Naive thymus-derived CD4-positive, alpha-beta T cell (primary cell): ENCODE measurements at regions of chr12 and their contacts with region 1.

Region 1: DNA sequence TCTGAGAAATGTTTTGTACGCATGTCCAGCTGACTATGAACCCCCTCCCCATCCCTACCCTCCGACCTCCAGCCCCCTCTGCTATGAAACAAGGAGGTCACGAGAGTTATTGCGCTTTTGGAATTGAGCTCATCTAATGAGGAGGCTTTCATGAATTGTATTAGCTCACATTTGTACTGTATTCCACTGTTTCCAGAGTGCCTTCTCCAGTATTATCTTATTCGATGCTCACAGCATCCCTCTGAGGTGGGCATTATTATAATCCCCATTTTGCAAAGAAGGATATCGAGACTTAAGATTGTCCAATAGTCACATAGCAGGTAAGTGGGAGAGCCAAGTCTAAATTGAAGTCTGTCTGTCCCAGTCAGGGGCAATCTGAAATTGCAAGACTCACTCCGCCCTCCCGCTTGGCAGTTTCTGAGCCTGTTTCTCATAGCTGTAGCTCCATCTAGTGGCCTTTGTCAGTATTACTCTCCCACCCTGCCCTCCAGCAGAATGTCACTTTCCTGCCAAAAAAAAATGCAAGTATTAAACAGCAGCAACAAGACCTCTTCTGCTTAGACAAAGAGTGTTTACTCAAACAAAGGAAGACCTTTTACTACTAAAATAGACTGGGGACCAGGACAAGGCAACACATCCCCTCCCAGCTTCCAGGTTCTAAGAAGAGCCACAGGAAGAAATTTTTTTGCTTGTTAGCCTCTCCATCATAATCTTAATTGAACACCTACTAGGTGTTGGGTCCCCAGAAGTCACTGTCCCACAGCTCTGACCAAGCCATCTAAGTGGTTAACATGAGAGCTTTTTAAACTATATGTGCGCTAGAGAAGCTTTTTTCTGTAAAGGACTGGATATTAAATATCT is 48.6 kb upstream of the TMEM233 start:
- DNase-seq: peak; percentile 5 to 58 (median 39)
- ATAC-seq: peak; percentile 70
- H3K4me3 ChIP-seq: no peak overlapping the region
- H3K4me3 Mint-ChIP-seq: no peak overlapping the region
- H3K27ac ChIP-seq: no peak overlapping the region
- H3K27ac Mint-ChIP-seq: no peak overlapping the region
- H3K4me1 ChIP-seq: no peaks in the 10 kb centered on the region
- H3K4me1 Mint-ChIP-seq: no peaks in the 10 kb centered on the region
- H3K27me3 ChIP-seq: no peaks in the 10 kb centered on the region
- H3K27me3 Mint-ChIP-seq: peaks cover 0 to 61% (median 50%) of the 10 kb centered on the region in 5 donors

Region 2: GRCh38 chr12:118189741-118190191 is 1355.2 kb before region 1 on chr12:
- CTCF ChIA-PET with region 1: no interaction called
- POLR2A ChIA-PET with region 1: no interaction called
- intact Hi-C with region 1: loop called in 1 of 2 experiments (anchors 10 kb)
- DNase-seq: no peak
- ATAC-seq: no peak
- H3K4me3 ChIP-seq: no peak overlapping the region
- H3K4me3 Mint-ChIP-seq: no peak overlapping the region
- H3K27ac ChIP-seq: no peak overlapping the region
- H3K27ac Mint-ChIP-seq: no peak overlapping the region
- H3K4me1 ChIP-seq: no peaks in the 10 kb centered on the region
- H3K4me1 Mint-ChIP-seq: peaks cover 0 to 16% (median 5%) of the 10 kb centered on the region in 7 donors
- H3K27me3 ChIP-seq: no peaks in the 10 kb centered on the region
- H3K27me3 Mint-ChIP-seq: no peaks in the 10 kb centered on the region

Region 3: GRCh38 chr12:118404876-118405521 is 1140.0 kb before region 1 on chr12:
- CTCF ChIA-PET with region 1: interaction called, 6 read pairs
- POLR2A ChIA-PET with region 1: no interaction called
- intact Hi-C with region 1: loop called in 1 of 2 experiments (anchors 10 kb)
- DNase-seq: peak in 7 of 9 donors; percentile 18 to 42 (median 33)
- ATAC-seq: peak; percentile 72
- H3K4me3 ChIP-seq: no peak overlapping the region
- H3K4me3 Mint-ChIP-seq: no peak overlapping the region
- H3K27ac ChIP-seq: no peak overlapping the region
- H3K27ac Mint-ChIP-seq: no peak overlapping the region
- H3K4me1 ChIP-seq: no peaks in the 10 kb centered on the region
- H3K4me1 Mint-ChIP-seq: peaks cover 0 to 3% (median 0%) of the 10 kb centered on the region in 7 donors
- H3K27me3 ChIP-seq: no peaks in the 10 kb centered on the region
- H3K27me3 Mint-ChIP-seq: no peaks in the 10 kb centered on the region

Region 4: GRCh38 chr12:119115296-119115905 is 429.6 kb before region 1 on chr12:
- CTCF ChIA-PET with region 1: interaction called, 3 read pairs
- POLR2A ChIA-PET with region 1: no interaction called
- intact Hi-C with region 1: loop called in 1 of 2 experiments (anchors 5 kb)
- DNase-seq: peak in 3 of 9 donors; percentile 8 to 20 (median 11)
- ATAC-seq: no peak
- H3K4me3 ChIP-seq: no peak overlapping the region
- H3K4me3 Mint-ChIP-seq: no peak overlapping the region
- H3K27ac ChIP-seq: no peak overlapping the region
- H3K27ac Mint-ChIP-seq: no peak overlapping the region
- H3K4me1 ChIP-seq: no peaks in the 10 kb centered on the region
- H3K4me1 Mint-ChIP-seq: no peaks in the 10 kb centered on the region
- H3K27me3 ChIP-seq: no peaks in the 10 kb centered on the region
- H3K27me3 Mint-ChIP-seq: peaks cover 0 to 24% (median 5%) of the 10 kb centered on the region in 5 donors

Region 5: DNA sequence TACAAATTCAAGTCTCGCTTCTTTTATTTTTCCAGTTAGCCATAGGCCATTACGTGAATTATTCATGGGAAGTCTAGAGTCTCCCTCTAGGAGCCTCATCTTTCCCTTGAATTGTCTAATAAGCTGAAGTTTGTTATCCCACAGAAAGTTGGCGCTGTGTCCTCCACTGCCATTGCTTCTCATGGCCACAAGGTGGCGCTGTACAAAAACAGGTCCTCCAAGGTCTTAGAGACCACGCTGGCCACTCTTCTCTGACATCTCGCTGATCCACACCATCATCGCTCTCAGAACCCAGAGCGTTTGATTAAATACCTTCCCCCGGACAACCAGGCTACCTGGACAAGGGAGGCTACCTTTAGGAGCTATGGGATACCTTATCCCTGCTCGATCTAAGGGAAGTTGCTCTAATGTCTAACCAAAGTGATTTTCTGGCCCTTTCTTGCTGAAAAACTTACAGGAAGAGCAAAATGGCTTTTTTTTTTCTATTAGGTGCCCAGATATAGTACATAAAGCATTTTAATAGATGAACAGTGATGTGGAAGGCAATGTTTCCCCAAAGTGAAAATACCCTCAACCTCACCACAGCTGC is 100.4 kb before region 1 on chr12:
- CTCF ChIA-PET with region 1: no interaction called
- POLR2A ChIA-PET with region 1: no interaction called
- intact Hi-C with region 1: loop called in 1 of 2 experiments (anchors 1 kb)
- DNase-seq: peak in 5 of 9 donors; percentile 2 to 38 (median 8)
- ATAC-seq: peak; percentile 60
- H3K4me3 ChIP-seq: no peak overlapping the region
- H3K4me3 Mint-ChIP-seq: no peak overlapping the region
- H3K27ac ChIP-seq: no peak overlapping the region
- H3K27ac Mint-ChIP-seq: no peak overlapping the region
- H3K4me1 ChIP-seq: no peaks in the 10 kb centered on the region
- H3K4me1 Mint-ChIP-seq: peaks cover 0 to 3% (median 0%) of the 10 kb centered on the region in 7 donors
- H3K27me3 ChIP-seq: peaks cover 0 to 4% of the 10 kb centered on the region in 2 donors
- H3K27me3 Mint-ChIP-seq: peaks cover 0 to 29% (median 26%) of the 10 kb centered on the region in 5 donors